H1 (cell line): ENCODE measurements at regions of chr11 and their contacts with region 1.

Region 1: DNA sequence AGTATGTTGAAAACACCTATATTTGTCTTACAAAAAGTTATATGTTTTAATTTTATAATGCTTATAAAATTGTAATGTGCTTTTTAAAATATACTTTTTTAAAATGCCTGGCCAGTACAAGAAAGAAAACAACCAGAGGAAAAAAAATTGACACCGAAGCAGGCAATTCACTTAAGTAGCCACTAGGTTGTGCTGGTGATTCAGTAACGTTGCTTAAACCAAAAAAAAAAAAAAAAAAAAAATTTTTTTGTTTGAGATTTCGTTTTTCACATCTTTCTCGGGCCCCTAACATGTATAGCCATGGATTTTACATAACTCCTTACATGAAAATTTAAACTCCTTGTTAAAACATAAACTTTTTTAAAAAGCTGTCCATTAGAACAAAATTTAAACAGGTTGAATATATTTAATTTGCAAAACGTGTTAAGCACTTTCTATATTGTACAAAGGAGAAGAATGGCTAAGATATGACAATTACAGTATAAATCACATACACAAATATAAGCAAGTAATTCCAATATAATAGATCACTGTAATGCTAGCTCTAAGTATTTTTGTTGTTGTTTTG is 9.2 kb downstream of the OR8B4 start:
- DNase-seq: no peak
- H3K4me3 ChIP-seq: no peak overlapping the region
- H3K27ac ChIP-seq: no peak overlapping the region
- H3K4me1 ChIP-seq: no peaks in the 10 kb centered on the region
- H3K27me3 ChIP-seq: no peaks in the 10 kb centered on the region
- CTCF ChIP-seq: peak in 2 of 3 experiments; percentile 25 to 54; a peak in 2 of 4 replicates
- EP300 ChIP-seq: no peak
- POLR2A ChIP-seq: no peak
- RAD21 ChIP-seq: peak; percentile 75 to 78

Region 2: DNA sequence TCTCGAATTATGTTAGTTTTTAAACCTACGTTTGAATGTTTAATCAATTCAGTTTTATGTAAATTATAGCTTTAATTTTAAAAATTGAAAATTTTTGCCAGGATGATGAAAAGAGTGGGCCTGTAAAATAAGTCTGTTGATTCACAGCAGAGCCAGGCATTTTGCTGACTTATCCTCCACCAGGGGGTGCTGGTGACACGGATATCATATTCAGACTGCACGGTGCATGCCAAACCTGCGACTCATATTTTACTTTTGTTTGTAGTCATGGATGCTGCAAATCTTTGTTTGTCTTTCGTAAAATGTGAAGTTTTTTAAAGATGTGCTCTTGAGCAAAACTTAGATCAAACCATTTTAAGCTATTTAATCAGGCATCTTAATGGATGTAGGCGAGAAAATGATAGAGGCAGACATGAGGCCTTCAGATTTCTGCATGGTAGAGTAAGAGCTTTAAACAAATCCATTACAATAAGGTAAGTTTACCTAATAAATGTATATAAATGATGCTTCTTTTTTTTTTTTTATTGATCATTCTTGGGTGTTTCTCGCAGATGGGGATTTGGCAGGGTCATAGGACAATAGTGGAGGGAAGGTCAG is 13.0 kb before region 1 on chr11:
- CTCF ChIA-PET with region 1: interaction called, 22 read pairs
- POLR2A ChIA-PET with region 1: no interaction called
- DNase-seq: peak; percentile 31 to 64
- H3K4me3 ChIP-seq: no peak overlapping the region
- H3K27ac ChIP-seq: no peak overlapping the region
- H3K4me1 ChIP-seq: no peaks in the 10 kb centered on the region
- H3K27me3 ChIP-seq: no peaks in the 10 kb centered on the region
- CTCF ChIP-seq: peak; percentile 57 to 78 (median 75)
- EP300 ChIP-seq: no peak
- POLR2A ChIP-seq: no peak
- RAD21 ChIP-seq: peak; percentile 67 to 77

Region 3: GRCh38 chr11:124442442-124442841 is 27.0 kb after region 1 on chr11:
- CTCF ChIA-PET with region 1: interaction called, 14 read pairs
- POLR2A ChIA-PET with region 1: no interaction called
- DNase-seq: no peak
- H3K4me3 ChIP-seq: no peak overlapping the region
- H3K27ac ChIP-seq: no peak overlapping the region
- H3K4me1 ChIP-seq: no peaks in the 10 kb centered on the region
- H3K27me3 ChIP-seq: no peaks in the 10 kb centered on the region
- CTCF ChIP-seq: no peak; a peak in 1 of 4 replicates
- EP300 ChIP-seq: no peak
- POLR2A ChIP-seq: no peak
- RAD21 ChIP-seq: peak; percentile 34 to 52

Region 4: DNA sequence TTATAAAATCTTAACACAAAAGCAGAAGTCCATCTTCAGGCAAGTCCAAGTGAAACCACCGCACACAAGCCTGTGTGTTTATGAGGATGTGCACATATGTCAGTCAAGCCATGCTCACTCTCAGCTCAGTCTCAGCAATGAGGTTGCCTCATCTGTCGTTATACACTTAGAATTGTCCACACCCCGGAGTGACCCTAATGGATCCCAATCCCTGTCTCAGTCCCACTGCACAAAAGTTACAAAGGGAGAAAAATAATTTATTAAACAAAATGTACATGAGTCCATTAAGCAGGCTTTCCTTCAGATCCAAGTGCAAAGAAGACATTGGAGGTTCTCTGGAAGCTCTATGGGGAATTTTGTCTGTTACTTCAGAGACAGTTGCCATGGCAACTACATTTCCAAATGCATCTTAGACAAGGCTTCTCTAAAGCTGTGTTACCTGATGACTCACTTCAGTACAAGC is 103.6 kb after region 1 on chr11:
- CTCF ChIA-PET with region 1: no interaction called
- POLR2A ChIA-PET with region 1: no interaction called
- DNase-seq: no peak
- H3K4me3 ChIP-seq: no peak overlapping the region
- H3K27ac ChIP-seq: no peak overlapping the region
- H3K4me1 ChIP-seq: no peaks in the 10 kb centered on the region
- H3K27me3 ChIP-seq: no peaks in the 10 kb centered on the region; a peak in 1 of 7 replicates
- CTCF ChIP-seq: no peak
- EP300 ChIP-seq: no peak
- POLR2A ChIP-seq: no peak
- RAD21 ChIP-seq: no peak

Region 5: DNA sequence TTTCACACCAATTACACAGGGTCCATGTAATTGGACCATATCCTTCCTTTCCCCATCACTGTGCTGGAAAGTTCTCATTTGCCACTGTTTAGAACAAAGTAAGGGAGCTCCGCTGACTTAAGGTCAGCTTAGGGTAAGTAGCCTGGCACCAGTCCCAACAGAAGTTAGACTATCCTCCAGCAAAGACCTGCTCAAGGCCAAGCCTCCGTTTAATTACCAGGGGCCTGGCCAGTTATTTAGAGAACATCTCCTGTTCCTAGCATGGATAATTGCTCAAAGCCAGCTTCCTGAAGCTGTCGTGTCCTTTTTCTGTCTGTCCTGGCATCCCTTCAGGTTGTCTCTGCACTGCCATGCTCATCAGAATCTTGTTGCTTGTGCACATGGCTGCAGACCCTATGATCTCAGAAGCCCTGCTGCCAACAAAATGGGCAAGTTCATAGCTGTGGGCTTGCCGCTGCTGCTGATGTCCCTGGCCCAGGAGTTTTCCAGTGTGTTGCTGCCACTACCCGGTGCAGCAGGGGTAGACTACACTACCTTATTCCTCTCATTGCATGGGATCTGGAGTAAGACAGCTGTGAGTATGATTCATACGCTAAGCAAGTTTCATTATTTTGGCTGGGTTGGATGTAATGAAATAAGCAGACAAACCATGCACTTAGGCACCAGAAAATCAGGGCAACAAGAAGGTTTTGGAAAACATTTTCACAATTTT is 162.4 kb after region 1 on chr11:
- CTCF ChIA-PET with region 1: interaction called, 59 read pairs
- POLR2A ChIA-PET with region 1: no interaction called
- DNase-seq: no peak
- H3K4me3 ChIP-seq: no peak overlapping the region
- H3K27ac ChIP-seq: no peak overlapping the region
- H3K4me1 ChIP-seq: no peaks in the 10 kb centered on the region
- H3K27me3 ChIP-seq: no peaks in the 10 kb centered on the region
- CTCF ChIP-seq: no peak
- EP300 ChIP-seq: no peak
- POLR2A ChIP-seq: no peak
- RAD21 ChIP-seq: no peak

Region 6: GRCh38 chr11:124622531-124623451 is 207.4 kb after region 1 on chr11 and contains the start of gene TBRG1:
- CTCF ChIA-PET with region 1: interaction called, 10 read pairs
- POLR2A ChIA-PET with region 1: interaction called, 4 read pairs
- DNase-seq: peak; percentile 68 to 80
- H3K4me3 ChIP-seq: peak within 1 kb of the TSS; percentile 85 to 96 (median 92)
- H3K27ac ChIP-seq: peak within 1 kb of the TSS; percentile 23; the same call in 1 of the 2 replicates
- H3K4me1 ChIP-seq: peaks cover 0 to 2% (median under 1%) of the 10 kb centered on the region in 4 experiments; a peak in 3 of 7 replicates
- H3K27me3 ChIP-seq: peaks cover 0 to 2% (median 0%) of the 10 kb centered on the region in 4 experiments; a peak in 1 of 7 replicates
- CTCF ChIP-seq: no peak
- EP300 ChIP-seq: no peak
- POLR2A ChIP-seq: peak; percentile 65 to 90
- RAD21 ChIP-seq: no peak; a peak in 1 of 4 replicates
- total RNA-seq, gene TBRG1: 22.7 and 26.7 TPM in 2 replicates